Activated naive CD4-positive, alpha-beta T cell treated with anti-CD3 and anti-CD28 coated beads for 36 hours (primary cell): ENCODE measurements at regions of chr14 and their contacts with region 1.

Region 1: GRCh38 chr14:91796617-91797347 is 64.9 kb upstream of the CATSPERB start:
- DNase-seq: no peak
- H3K4me3 Mint-ChIP-seq: no peak overlapping the region
- H3K27ac Mint-ChIP-seq: peak overlapping the region; percentile 8
- H3K4me1 Mint-ChIP-seq: peaks cover 24% of the 10 kb centered on the region
- H3K27me3 Mint-ChIP-seq: no peaks in the 10 kb centered on the region

Region 2: GRCh38 chr14:91830777-91831176 is 34.0 kb after region 1 on chr14:
- CTCF ChIA-PET with region 1: no interaction called
- intact Hi-C with region 1: loop called (anchors 5 kb)
- DNase-seq: peak; percentile 45
- H3K4me3 Mint-ChIP-seq: no peak overlapping the region
- H3K27ac Mint-ChIP-seq: no peak overlapping the region
- H3K4me1 Mint-ChIP-seq: peaks cover 66% of the 10 kb centered on the region
- H3K27me3 Mint-ChIP-seq: no peaks in the 10 kb centered on the region